HAP-1 (cell line): ENCODE measurements at regions of chr15 and their contacts with region 1.

Region 1: GRCh38 chr15:82393671-82394070 is 35.9 kb upstream of the GOLGA6L9 start:
- DNase-seq: no peak
- H3K4me3 ChIP-seq: no peak overlapping the region
- H3K4me1 ChIP-seq: peaks cover 4% of the 10 kb centered on the region; the same call in 1 of the 2 replicates
- H3K27me3 ChIP-seq: no peaks in the 10 kb centered on the region

Region 2: GRCh38 chr15:82312586-82313349 is 80.9 kb before region 1 on chr15:
- in situ Hi-C with region 1: loop called (anchors 10 kb)
- DNase-seq: peak in 1 of 2 experiments; percentile 7
- H3K4me3 ChIP-seq: no peak overlapping the region
- H3K4me1 ChIP-seq: no peaks in the 10 kb centered on the region
- H3K27me3 ChIP-seq: peaks cover 12% of the 10 kb centered on the region

Region 3: DNA sequence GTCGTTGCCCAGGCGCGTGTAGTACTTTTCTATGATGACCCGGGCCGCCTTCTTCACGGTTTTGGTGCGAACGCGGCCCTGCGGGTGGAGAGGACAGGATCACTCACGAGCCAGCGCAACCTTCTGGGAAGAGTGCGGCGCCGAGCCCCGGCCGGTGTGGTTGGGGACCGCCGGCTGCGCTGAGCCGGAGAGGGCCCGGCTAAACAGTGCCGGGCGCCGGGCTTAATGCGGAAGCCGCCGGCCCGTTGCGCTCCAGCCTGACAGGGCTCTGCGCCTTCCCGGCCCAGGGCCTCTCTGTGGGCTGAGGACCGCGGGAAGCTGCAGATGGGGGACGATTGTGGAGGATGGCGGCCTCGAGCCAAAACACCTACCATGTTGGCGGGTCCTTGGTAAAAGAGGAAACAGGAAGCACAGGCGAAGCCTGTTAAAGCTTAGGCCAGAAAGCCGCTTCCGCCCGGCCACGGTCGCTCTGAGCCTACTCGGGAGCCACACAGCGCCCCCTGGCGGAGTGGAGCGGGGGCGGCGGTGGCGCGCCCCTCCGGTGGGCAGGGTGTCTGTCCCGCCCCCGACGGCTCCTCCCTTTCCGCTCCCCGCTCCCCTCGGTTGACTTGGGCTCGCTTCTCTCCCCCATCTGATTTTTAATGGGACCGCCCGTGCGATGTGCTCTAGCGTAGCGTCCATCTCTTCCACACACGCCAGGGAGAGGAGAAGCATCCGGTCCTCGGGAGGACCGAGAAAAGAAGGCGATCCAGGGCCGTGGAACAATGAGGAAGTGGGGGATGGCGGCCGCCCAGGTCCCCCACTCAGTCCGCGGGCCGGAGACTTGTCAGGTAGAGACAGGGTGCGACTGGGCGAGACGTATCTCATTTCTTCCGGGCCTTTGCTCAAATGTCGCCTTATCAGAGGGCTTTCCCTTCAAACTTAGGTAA is 146.6 kb after region 1 on chr15 and contains the start of gene RPS17:
- in situ Hi-C with region 1: loop called (anchors 25 kb)
- DNase-seq: peak; percentile 99 to 100
- H3K4me3 ChIP-seq: peak within 1 kb of the TSS; percentile 97
- H3K4me1 ChIP-seq: peaks cover 11% of the 10 kb centered on the region
- H3K27me3 ChIP-seq: no peaks in the 10 kb centered on the region